ENCODE measurements at regions of chr20 and their contacts with region 1.

Region 1: GRCh38 chr20:38842558-38842981 is 37.1 kb downstream of the PPP1R16B start:
- DNase-seq: peak; percentile 84
- H3K4me3 Mint-ChIP-seq: no peak overlapping the region
- H3K27ac Mint-ChIP-seq: peak overlapping the region; percentile 91
- H3K4me1 Mint-ChIP-seq: peaks cover 73% of the 10 kb centered on the region
- H3K27me3 Mint-ChIP-seq: no peaks in the 10 kb centered on the region

Region 2: GRCh38 chr20:38434743-38435554 is 407.6 kb before region 1 on chr20 and contains the start of gene SNHG17:
- CTCF ChIA-PET with region 1: no interaction called
- intact Hi-C with region 1: no loop called
- DNase-seq: peak; percentile 91
- H3K4me3 Mint-ChIP-seq: peak within 1 kb of the TSS; percentile 89
- H3K27ac Mint-ChIP-seq: peak within 1 kb of the TSS; percentile 97
- H3K4me1 Mint-ChIP-seq: peaks cover 40% of the 10 kb centered on the region
- H3K27me3 Mint-ChIP-seq: no peaks in the 10 kb centered on the region
- total RNA-seq, gene SNHG17: 69.1 to 72.9 TPM

Region 3: DNA sequence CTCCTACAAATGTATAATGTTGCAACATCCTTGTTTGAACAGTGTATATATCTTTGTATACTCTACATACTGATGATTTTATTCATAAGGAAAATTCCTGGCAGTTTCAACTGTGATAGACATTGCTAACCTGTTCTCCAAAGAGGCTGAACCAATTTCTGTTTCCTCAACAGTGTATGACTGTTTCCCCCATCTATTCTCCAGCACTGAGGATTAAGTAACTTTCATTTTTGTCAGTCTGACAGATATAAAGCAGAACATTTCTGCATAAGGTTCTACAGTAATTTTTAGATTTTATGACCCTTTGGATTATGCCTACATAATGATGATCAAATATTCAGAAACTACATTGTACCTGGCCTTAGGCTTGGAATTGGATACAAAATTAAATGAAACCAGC is 27.1 kb before region 1 on chr20:
- CTCF ChIA-PET with region 1: no interaction called
- intact Hi-C with region 1: no loop called
- DNase-seq: no peak
- H3K4me3 Mint-ChIP-seq: no peak overlapping the region
- H3K27ac Mint-ChIP-seq: no peak overlapping the region
- H3K4me1 Mint-ChIP-seq: peaks cover 53% of the 10 kb centered on the region
- H3K27me3 Mint-ChIP-seq: no peaks in the 10 kb centered on the region

Region 4: DNA sequence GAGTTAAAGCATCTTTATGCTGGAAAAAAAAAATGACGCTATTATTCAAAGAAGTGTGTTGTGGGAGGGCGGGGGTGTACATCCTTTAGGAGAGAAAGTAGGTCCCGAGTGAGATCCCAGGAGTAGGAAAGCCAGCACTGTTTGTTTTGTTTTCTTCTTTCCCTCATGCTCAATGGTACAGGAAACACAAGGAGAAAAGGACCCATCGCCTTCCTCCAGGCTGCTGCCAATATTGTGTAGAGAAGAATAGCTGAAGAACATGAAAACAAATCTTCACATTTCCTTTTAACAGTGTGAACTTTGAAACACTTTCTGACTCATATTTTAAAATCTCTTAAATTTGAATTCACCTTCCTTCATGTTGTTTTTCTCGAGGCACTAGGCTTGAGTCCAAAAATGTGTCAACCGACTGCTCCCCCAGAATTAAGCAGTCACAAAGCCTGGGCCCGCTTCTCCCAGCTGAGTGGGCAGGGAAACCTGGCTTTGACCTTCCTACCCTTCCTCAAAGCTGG is 14.7 kb before region 1 on chr20:
- CTCF ChIA-PET with region 1: no interaction called
- intact Hi-C with region 1: loop called (anchors 1 kb)
- DNase-seq: peak; percentile 43
- H3K4me3 Mint-ChIP-seq: no peak overlapping the region
- H3K27ac Mint-ChIP-seq: peak overlapping the region; percentile 89
- H3K4me1 Mint-ChIP-seq: peaks cover 74% of the 10 kb centered on the region
- H3K27me3 Mint-ChIP-seq: no peaks in the 10 kb centered on the region

Region 5: GRCh38 chr20:38863024-38863851 is 20.7 kb after region 1 on chr20:
- CTCF ChIA-PET with region 1: interaction called, 3 read pairs
- intact Hi-C with region 1: loop called (anchors 1 kb)
- DNase-seq: peak; percentile 81
- H3K4me3 Mint-ChIP-seq: peak overlapping the region; percentile 9
- H3K27ac Mint-ChIP-seq: peak overlapping the region; percentile 78
- H3K4me1 Mint-ChIP-seq: peaks cover 49% of the 10 kb centered on the region
- H3K27me3 Mint-ChIP-seq: no peaks in the 10 kb centered on the region

Region 6: GRCh38 chr20:38970302-38970701 is 127.7 kb after region 1 on chr20:
- CTCF ChIA-PET with region 1: no interaction called
- intact Hi-C with region 1: no loop called
- DNase-seq: no peak
- H3K4me3 Mint-ChIP-seq: no peak overlapping the region
- H3K27ac Mint-ChIP-seq: no peak overlapping the region
- H3K4me1 Mint-ChIP-seq: peaks cover 6% of the 10 kb centered on the region
- H3K27me3 Mint-ChIP-seq: no peaks in the 10 kb centered on the region